ENCODE measurements at regions of chr2 and their contacts with region 1.

Region 1: DNA sequence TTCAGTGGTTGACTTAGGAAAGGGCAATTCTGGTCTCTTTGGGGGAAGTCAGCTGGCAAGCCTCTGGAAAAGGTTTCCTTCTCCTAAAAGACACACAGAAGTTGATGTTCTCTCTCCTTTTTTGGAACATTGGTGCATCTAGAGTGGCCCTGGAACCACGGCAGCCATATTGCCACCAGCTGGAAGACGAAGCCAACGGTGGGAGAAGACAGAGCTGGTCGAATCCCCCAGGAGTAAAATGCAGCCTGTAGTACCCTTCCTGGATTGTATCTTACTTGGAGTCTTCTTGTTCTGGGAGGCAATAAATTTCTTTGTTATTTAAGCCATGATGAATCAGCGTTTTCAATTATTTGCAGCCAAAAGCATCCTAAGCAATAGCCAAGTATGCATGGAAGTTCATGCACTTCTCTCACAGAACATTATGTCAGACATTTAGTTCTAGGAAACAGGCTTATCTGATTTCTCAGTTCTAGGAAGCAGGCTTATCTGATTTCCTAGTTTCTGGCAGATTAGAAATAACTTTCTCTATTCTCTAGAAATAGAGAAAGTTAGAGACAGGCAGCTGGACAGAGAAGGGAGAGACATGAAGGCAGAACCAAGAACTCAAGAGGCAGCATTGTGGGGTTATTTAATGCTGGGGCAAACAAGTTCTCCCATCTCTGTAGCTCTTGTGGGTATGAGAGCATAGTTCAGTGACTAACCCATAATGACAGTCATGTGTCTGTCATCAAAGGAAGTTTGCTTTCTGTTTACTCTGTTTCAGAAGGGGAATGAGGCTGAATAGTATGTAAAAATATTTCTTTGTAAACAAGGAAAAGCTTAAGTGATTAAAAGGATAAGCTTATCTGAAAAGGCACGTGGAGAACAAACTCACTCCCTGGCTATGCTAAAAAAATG is 40.5 kb upstream of the NABP1 start:
- DNase-seq: no peak
- ATAC-seq: peak; percentile 85
- H3K4me3 Mint-ChIP-seq: peak overlapping the region; percentile 15
- H3K27ac Mint-ChIP-seq: peak overlapping the region; percentile 91
- H3K4me1 Mint-ChIP-seq: peaks cover 59% of the 10 kb centered on the region
- H3K27me3 Mint-ChIP-seq: no peaks in the 10 kb centered on the region

Region 2: DNA sequence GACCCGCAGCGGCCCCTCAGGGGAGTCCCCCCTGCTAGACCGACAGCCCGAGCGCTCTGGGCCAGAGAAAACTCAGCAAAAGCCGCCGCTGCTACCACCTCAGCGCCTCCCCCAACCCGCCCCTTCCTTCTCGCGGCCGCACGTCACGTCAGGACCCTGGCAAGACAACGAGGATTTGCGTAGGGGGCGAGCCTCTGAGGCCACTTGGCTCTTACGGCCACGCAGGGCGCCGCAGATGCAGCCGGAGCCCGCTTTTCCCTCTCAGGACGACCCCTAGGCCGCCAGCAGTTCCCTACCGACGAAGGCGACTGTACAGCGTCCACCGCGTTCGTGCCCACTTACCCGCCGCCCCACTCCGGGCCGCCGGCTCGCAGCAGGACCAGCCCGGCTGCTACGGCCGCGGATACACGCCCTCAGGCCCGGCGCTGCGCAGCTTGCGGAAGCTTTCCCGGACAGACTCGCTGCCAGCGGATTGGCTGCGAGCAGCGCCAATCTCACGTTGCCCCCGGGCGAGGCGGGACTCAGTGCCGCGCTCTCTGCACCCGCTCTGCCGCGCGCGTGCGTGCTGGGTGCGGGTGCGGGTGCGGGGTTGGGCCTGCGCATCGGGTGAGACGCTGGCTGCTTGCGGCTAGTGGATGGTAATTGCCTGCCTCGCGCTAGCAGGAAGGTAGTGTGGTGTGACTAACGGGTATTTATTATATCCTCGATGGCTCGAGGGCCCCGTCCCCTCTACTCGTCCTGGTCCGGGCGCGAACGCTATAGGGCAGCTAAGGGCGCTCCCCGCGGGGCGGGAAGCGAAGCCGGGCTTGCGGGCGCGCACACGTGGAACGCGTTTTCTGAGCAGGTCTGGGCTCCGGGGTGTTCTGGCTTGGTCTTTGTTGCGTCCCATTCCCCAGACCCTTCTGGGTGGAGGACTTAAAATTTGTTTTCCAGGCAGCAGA is 1853.2 kb before region 1 on chr2 and contains the starts of genes ORMDL1 and PMS1:
- CTCF ChIA-PET with region 1: no interaction called
- POLR2A ChIA-PET with region 1: no interaction called
- intact Hi-C with region 1: loop called in 1 of 2 experiments (anchors 10 kb)
- DNase-seq: peak; percentile 96
- ATAC-seq: peak; percentile 92
- H3K4me3 Mint-ChIP-seq: peak within 1 kb of the TSS; percentile 74
- H3K27ac Mint-ChIP-seq: peak within 1 kb of the TSS; percentile 94
- H3K4me1 Mint-ChIP-seq: peaks cover 52% of the 10 kb centered on the region
- H3K27me3 Mint-ChIP-seq: no peaks in the 10 kb centered on the region
- total RNA-seq, gene ORMDL1: 45.2 to 49.2 TPM
- total RNA-seq, gene PMS1: 45.8 to 47.4 TPM

Region 3: DNA sequence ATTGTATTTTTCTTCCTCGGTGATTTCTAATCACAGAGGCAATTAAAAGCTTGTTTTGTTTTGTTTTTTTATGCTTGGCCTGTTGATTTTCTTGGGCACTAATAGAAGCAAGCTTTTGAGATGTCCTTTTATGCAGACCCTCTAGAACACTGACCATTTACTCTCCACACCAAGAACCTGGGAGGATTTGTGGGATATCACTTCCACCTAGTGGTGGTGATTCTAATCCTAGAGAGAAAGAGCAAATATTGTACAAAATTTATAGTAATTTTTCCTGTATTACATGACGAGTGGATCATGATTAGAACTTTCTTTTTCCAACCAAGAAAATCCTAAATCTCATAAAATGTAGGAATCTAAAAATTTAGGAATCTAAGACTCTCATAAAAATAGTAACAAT is 1126.3 kb before region 1 on chr2:
- CTCF ChIA-PET with region 1: no interaction called
- POLR2A ChIA-PET with region 1: no interaction called
- intact Hi-C with region 1: no loop called
- DNase-seq: no peak
- ATAC-seq: no peak
- H3K4me3 Mint-ChIP-seq: no peak overlapping the region
- H3K27ac Mint-ChIP-seq: no peak overlapping the region
- H3K4me1 Mint-ChIP-seq: peaks cover 24% of the 10 kb centered on the region
- H3K27me3 Mint-ChIP-seq: no peaks in the 10 kb centered on the region

Region 4: DNA sequence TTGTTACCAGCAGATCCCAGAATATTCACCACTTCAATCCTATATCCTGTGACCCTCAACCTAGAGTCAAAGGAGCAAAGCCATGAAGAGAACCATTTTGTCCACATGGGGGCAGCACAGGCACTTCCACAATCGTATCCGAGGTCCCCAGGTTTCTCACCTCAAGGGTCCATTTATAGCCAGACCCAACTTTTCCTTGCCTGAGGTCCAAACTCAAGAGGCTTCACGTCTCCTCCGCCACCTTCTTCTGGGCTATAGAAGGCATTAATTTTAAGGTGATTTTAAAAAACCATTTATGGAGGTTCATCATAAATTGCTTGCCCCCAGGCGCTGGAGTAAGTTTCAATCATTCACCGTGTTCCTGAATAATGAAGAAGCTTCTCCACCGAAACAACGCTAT is 71.1 kb before region 1 on chr2:
- CTCF ChIA-PET with region 1: interaction called, 5 read pairs
- POLR2A ChIA-PET with region 1: interaction called, 3 read pairs
- intact Hi-C with region 1: loop called (anchors 1 kb)
- DNase-seq: peak; percentile 81
- ATAC-seq: peak; percentile 70
- H3K4me3 Mint-ChIP-seq: no peak overlapping the region
- H3K27ac Mint-ChIP-seq: no peak overlapping the region
- H3K4me1 Mint-ChIP-seq: peaks cover 16% of the 10 kb centered on the region
- H3K27me3 Mint-ChIP-seq: peaks cover 19% of the 10 kb centered on the region

Region 5: GRCh38 chr2:191625016-191625415 is 12.4 kb before region 1 on chr2:
- CTCF ChIA-PET with region 1: interaction called, 6 read pairs
- POLR2A ChIA-PET with region 1: interaction called, 11 read pairs
- intact Hi-C with region 1: loop called (anchors 2 kb)
- DNase-seq: peak; percentile 64
- ATAC-seq: peak; percentile 57
- H3K4me3 Mint-ChIP-seq: no peak overlapping the region
- H3K27ac Mint-ChIP-seq: peak overlapping the region; percentile 86
- H3K4me1 Mint-ChIP-seq: peaks cover 69% of the 10 kb centered on the region
- H3K27me3 Mint-ChIP-seq: no peaks in the 10 kb centered on the region

Region 6: DNA sequence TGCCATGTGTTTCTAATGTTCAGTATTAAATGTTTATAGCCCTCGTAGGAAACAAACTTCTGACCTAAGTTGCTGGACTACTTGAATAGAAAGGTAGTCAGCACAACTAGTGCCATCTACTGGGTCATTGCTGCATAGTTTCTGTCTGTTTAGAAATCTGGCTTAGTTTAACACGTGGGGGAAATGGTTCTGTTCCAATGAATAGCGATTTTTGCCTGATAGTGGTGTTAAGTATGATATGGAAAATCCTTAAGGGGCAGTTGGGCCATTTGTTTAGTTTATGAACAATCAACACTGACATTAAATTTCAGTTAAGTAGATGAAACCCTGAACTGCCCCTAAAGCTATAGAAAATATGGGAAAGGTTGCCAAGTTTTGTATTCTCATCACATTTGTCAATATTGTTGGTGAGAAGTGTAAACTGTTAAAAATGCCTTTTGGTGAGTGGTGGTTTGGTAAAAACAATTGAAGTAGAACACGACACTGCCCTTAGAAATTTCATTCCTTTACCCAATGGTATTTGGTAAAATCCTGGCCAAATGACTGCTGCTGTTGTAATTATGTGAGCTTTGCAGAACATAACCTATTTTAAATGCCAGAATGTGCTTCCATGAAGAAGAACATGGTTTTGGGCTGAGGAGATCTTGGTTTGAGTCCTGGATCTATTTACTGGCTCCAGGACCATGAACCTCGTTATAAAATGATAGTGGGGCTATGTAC is 53.7 kb after region 1 on chr2:
- CTCF ChIA-PET with region 1: interaction called, 4 read pairs
- POLR2A ChIA-PET with region 1: no interaction called
- intact Hi-C with region 1: loop called (anchors 2 kb)
- DNase-seq: peak; percentile 58
- ATAC-seq: peak; percentile 43
- H3K4me3 Mint-ChIP-seq: peak overlapping the region; percentile 25
- H3K27ac Mint-ChIP-seq: peak overlapping the region; percentile 77
- H3K4me1 Mint-ChIP-seq: peaks cover 56% of the 10 kb centered on the region
- H3K27me3 Mint-ChIP-seq: no peaks in the 10 kb centered on the region

Measured in activated CD4-positive, alpha-beta T cell treated with anti-CD3 and anti-CD28 coated beads for 36 hours (primary cell).